Stomach (tissue), 19 donors: ENCODE measurements at regions of chr17 and their contacts with region 1.

Region 1: DNA sequence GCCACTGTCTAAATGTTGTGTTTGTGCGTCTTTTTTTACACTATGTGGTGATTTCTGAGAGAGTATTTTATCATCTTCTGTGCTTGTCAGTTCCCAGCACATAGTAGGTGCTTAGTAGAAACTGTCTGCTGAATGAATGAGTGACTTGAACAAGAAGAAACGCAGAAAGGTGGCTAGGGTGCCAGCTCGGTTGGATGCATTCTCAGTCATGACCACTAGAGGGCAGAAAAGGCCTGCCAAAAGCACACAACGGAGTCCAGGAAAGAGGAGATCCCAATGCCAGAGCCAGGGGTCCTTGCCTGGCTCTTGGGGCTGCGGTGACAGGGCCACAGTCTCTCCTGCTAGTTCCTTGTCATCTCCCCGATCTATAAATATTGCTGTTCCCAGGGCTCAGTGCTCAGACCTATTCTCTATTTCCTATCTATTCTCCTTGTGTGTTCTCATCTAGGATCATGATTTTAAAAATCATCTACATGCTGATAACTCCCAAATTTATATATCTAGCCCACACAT is 57.3 kb upstream of the CCL1 start:
- DNase-seq: peak; percentile 68 to 84
- H3K4me3 ChIP-seq: no peak overlapping the region
- H3K27ac ChIP-seq: no peak overlapping the region
- H3K4me1 ChIP-seq: peaks cover 0 to 14% (median 0%) of the 10 kb centered on the region in 4 donors
- H3K27me3 ChIP-seq: peaks cover 3 to 76% (median 36%) of the 10 kb centered on the region in 3 donors
- CTCF ChIP-seq: peak in 6 of 7 experiments; percentile 64 to 96 (median 90)
- EP300 ChIP-seq: no peak
- POLR2A ChIP-seq: no peak

Region 2: GRCh38 chr17:34110315-34110714 is 310.0 kb before region 1 on chr17:
- intact Hi-C with region 1: no loop called
- DNase-seq: peak in 1 of 2 donors; percentile 55
- H3K4me3 ChIP-seq: no peak overlapping the region
- H3K27ac ChIP-seq: no peak overlapping the region
- H3K4me1 ChIP-seq: no peaks in the 10 kb centered on the region
- H3K27me3 ChIP-seq: peaks cover 0 to 46% (median 19%) of the 10 kb centered on the region in 3 donors
- CTCF ChIP-seq: no peak
- EP300 ChIP-seq: no peak
- POLR2A ChIP-seq: no peak

Region 3: DNA sequence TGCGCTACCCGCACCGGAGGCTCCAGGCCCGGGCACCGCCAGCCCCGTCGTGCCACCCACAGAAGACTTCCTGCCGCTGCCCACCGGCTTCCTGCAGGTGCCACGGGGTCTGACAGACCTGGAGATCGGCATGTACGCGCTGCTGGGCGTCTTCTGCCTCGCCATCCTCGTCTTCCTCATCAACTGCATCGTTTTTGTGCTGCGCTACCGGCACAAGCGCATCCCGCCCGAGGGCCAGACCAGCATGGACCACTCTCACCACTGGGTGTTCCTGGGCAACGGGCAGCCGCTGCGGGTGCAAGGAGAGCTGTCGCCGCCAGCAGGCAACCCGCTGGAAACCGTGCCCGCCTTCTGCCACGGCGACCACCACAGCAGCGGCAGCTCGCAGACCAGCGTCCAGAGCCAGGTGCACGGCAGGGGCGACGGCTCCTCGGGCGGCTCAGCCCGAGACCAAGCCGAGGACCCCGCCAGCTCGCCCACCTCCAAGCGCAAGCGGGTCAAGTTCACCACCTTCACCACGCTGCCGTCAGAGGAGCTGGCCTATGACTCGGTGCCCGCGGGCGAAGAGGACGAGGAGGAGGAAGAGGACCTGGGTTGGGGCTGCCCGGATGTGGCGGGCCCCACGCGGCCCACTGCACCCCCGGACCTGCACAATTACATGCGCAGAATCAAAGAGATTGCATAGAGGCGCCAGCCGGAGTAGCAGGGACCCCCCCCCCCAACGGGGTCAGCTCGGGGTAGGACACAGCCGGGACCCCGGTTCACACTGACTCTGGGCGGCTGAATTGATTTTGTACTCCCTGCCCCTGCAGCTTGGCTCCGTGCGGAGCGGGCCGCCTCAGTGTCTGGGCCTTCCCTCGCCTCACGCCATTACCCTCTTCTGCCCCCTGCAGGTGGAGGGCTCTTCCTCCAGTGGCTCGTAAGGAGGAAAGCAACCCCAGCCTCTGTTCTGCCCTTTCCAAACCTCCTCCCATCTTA is 217.5 kb after region 1 on chr17:
- intact Hi-C with region 1: loop called (anchors 5 kb)
- DNase-seq: peak; percentile 79 to 94
- H3K4me3 ChIP-seq: peak overlapping the region; percentile 41 to 48 (median 45)
- H3K27ac ChIP-seq: no peak overlapping the region
- H3K4me1 ChIP-seq: peaks cover 7 to 14% (median 11%) of the 10 kb centered on the region in 4 donors
- H3K27me3 ChIP-seq: peaks cover 7 to 91% (median 37%) of the 10 kb centered on the region in 3 donors
- CTCF ChIP-seq: peak in 5 of 7 experiments; percentile 52 to 84 (median 77)
- EP300 ChIP-seq: no peak
- POLR2A ChIP-seq: no peak

Region 4: DNA sequence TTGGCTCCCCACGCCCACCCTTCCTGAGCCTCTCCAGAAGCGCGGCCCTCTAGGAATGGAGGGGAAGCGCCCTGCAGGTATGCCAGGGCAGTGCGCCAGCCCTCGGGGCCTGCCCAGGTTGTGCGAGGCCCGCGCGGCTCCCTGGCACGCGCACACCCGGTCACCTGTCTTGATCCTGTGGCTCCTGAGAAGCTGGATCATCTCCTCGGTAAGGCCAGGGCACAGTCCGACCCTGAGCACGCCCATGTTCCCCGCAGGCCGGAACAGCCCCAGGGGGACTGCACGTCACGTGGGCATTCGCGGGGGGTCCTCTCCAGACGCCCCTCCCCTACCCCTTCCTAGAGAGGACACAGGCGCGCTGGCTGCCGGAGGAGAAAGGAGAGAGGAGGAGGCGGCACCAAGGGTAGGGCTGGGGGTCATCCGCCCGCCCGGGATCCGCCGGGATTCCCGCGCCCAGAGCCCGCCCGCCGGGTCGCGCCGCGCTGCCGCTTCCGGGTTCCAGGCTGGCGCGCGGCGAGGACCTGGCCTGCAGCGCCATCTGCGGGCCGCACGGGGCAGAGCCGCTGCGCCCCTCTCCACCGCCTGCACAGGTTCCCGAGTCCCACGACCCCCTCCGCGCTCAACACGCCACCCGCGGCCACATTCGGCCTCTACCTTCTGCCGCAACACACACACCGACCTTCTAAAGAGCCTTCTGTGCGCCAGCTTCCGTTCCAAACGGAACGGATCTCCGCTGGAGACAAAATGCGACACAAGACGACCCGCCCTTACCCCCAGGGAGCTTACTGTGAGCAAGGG is 699.3 kb after region 1 on chr17 and contains the start of gene RAD51D:
- intact Hi-C with region 1: loop called (anchors 5 kb)
- DNase-seq: peak; percentile 81 to 94
- H3K4me3 ChIP-seq: peak within 1 kb of the TSS; percentile 72 to 88 (median 77)
- H3K27ac ChIP-seq: peak within 1 kb of the TSS; percentile 20 to 86 (median 77)
- H3K4me1 ChIP-seq: peaks cover 16 to 29% (median 25%) of the 10 kb centered on the region in 4 donors
- H3K27me3 ChIP-seq: no peaks in the 10 kb centered on the region
- CTCF ChIP-seq: peak in 5 of 7 experiments; percentile 70 to 99 (median 96)
- EP300 ChIP-seq: no peak
- POLR2A ChIP-seq: no peak
- total RNA-seq, gene RAD51D: 2.2 to 31.5 (median 3.5) TPM